ENCODE measurements at regions of chr3 and their contacts with region 1.

Region 1: GRCh38 chr3:184314363-184314699 is at the start of gene EIF4G1:
- DNase-seq: peak; percentile 93
- H3K4me3 Mint-ChIP-seq: peak within 1 kb of the TSS; percentile 86
- H3K27ac Mint-ChIP-seq: peak within 1 kb of the TSS; percentile 90
- H3K4me1 Mint-ChIP-seq: peaks cover 29% of the 10 kb centered on the region
- H3K27me3 Mint-ChIP-seq: no peaks in the 10 kb centered on the region
- total RNA-seq, gene EIF4G1: 345 to 375 TPM

Region 2: DNA sequence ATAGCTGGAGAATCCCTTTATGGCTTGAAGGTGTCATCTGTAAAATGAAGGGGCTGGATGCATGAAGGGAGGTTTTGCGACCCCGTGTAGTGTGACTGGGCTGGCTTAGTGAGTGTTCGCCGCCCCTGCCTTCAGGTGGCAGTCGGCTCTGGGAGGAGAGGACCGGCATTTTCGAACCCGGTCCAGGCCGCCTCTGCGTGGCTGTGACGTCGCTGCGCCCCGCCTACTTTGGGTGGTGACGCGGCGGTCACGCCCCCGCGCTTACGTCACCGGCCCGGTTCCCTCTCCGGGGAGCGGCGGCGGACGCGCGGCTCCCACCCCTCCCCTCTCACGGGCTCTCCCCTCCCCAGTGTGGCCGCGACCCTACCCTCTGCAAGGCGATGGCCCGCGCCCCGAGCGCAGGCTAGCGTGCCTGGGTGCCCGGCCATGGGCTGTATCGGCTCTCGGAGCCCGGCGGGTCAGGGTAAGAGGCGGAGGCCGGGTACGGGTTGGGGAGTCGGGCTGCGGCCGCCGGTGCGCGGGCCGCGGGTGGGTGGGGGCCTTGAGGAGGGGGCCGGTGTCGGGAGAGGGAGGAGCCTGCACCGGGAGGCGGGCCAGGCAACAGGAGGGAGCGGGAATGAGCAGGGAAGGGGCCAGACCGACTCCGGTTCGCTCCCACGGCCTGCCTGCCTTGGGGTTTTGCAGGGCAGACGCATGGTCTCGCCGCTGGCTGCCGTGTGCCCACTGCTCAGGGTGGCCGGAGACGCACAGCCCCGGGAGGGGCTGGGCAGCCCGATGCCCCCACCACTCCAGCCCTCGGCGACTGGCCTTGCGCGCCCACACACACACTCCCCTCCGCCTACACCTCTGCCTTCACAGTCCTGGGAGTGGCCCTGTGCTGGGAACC is 21.6 kb after region 1 on chr3:
- CTCF ChIA-PET with region 1: interaction called, 3 read pairs
- intact Hi-C with region 1: loop called (anchors 1 kb)
- DNase-seq: peak; percentile 85
- H3K4me3 Mint-ChIP-seq: peak overlapping the region; percentile 80
- H3K27ac Mint-ChIP-seq: peak overlapping the region; percentile 87
- H3K4me1 Mint-ChIP-seq: peaks cover 62% of the 10 kb centered on the region
- H3K27me3 Mint-ChIP-seq: no peaks in the 10 kb centered on the region